Activated CD4-positive, alpha-beta T cell treated with anti-CD3 and anti-CD28 coated beads, Interleukin-2, amount 10 ng/mL, durations not matched to agents 24 days and 14 days (primary cell): ENCODE measurements at regions of chr6 and their contacts with region 1.

Region 1: GRCh38 chr6:25992413-25993037 is 29.9 kb downstream of the TRIM38 start:
- DNase-seq: peak; percentile 99
- H3K4me3 Mint-ChIP-seq: peak overlapping the region; percentile 98
- H3K27ac Mint-ChIP-seq: peak overlapping the region; percentile 95
- H3K4me1 Mint-ChIP-seq: peaks cover 22% of the 10 kb centered on the region
- H3K27me3 Mint-ChIP-seq: no peaks in the 10 kb centered on the region

Region 2: DNA sequence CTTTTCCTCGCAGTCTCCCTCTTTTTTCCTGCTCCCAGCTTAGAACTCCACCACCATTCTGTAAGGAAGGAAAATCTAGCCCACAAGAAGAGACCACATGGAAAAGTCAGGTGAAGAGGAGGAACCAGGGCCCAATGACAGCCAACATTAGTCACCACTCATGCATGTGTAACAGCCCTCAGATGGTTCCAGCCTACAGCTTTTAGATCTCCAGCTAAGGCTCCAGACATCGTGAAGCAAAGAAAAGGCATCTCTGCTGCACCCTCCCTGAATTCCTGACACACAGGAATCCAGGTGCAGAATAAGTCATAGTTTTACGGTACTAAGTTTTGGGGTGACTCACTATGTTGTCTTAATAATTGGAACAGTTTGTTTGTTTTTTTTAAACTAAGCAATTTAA is 1660.2 kb before region 1 on chr6:
- intact Hi-C with region 1: no loop called
- DNase-seq: no peak
- H3K4me3 Mint-ChIP-seq: no peak overlapping the region
- H3K27ac Mint-ChIP-seq: no peak overlapping the region
- H3K4me1 Mint-ChIP-seq: no peaks in the 10 kb centered on the region
- H3K27me3 Mint-ChIP-seq: peaks cover 12% of the 10 kb centered on the region

Region 3: GRCh38 chr6:25962149-25963127 is 30.1 kb before region 1 on chr6 and contains the start of gene TRIM38:
- intact Hi-C with region 1: loop called (anchors 1 kb)
- DNase-seq: peak; percentile 94
- H3K4me3 Mint-ChIP-seq: peak within 1 kb of the TSS; percentile 88
- H3K27ac Mint-ChIP-seq: peak within 1 kb of the TSS; percentile 96
- H3K4me1 Mint-ChIP-seq: peaks cover 75% of the 10 kb centered on the region
- H3K27me3 Mint-ChIP-seq: no peaks in the 10 kb centered on the region
- total RNA-seq, gene TRIM38: 23.0 and 24.5 TPM in 2 replicates

Region 4: DNA sequence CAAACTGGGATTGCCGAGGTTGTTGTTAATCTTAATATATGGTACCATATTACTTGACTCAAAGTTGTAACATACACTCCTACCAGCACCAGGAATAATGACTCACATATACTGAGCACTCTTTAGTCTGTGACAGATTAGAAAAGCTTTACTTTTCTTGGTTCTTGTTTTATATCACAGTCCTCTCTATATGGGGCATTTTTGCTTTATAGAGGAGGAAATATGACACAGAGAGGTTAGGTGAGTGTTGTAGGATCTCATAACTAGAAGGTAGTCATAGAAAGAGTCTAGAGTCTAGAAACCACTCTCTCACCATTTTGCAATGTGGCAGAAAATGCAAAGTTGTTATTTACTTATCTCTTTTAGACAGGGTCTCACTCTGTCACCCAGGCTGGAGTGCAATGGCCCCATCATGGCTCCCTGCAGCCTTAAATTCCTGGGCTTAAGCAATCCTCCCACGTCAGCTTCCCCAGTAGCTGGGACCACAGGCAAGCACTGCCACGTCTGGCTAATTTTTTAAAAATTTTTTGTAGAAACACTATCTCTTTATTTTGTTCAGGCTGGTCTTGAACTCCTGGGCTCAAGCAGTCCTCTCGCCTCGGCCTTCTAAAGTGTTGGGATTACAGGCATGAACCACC is 16.5 kb before region 1 on chr6:
- intact Hi-C with region 1: loop called (anchors 2 kb)
- DNase-seq: no peak
- H3K4me3 Mint-ChIP-seq: no peak overlapping the region
- H3K27ac Mint-ChIP-seq: peak overlapping the region; percentile 27
- H3K4me1 Mint-ChIP-seq: peaks cover 23% of the 10 kb centered on the region
- H3K27me3 Mint-ChIP-seq: no peaks in the 10 kb centered on the region

Region 5: DNA sequence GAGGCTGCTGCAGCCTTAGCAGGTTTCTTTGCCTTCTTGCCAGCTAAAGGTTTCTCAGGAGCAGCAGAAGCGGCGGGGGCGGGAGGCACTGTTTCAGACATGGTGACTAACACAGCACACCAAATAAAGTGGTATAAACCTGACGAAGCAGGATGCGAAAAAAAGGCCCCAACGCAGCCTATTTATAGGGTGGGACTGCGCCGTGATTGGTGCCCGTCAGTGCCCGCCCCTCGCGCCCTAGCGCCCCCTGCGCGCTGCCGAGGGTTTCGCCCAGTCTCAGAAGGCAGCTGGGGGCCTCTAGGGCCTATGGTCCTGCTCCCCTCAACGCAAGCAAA is 25.1 kb after region 1 on chr6:
- intact Hi-C with region 1: loop called (anchors 1 kb)
- DNase-seq: peak; percentile 92
- H3K4me3 Mint-ChIP-seq: peak overlapping the region; percentile 86
- H3K27ac Mint-ChIP-seq: peak overlapping the region; percentile 96
- H3K4me1 Mint-ChIP-seq: peaks cover 23% of the 10 kb centered on the region
- H3K27me3 Mint-ChIP-seq: no peaks in the 10 kb centered on the region

Region 6: DNA sequence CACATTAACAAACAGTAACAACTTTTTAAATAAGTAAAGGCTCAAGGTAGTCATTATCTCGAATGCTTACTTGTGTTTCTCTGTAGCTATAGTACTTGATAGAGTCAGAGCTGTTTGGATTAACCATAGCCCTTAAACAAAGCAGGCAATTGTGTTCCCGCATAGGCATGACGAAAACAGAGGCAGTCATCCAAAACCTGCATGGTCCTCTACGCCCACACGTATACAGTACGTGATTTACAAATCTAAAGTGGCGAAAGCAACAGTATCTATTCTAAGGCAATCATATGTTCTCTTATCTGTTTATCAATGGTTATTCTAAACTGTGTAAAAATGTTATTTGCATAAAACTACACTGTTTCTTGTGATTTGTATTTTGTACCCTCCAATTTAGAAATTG is 126.5 kb after region 1 on chr6:
- intact Hi-C with region 1: no loop called
- DNase-seq: peak; percentile 48
- H3K4me3 Mint-ChIP-seq: no peak overlapping the region
- H3K27ac Mint-ChIP-seq: no peak overlapping the region
- H3K4me1 Mint-ChIP-seq: peaks cover 39% of the 10 kb centered on the region
- H3K27me3 Mint-ChIP-seq: peaks cover 5% of the 10 kb centered on the region